ENCODE measurements at regions of chr7 and their contacts with region 1.

Region 1: DNA sequence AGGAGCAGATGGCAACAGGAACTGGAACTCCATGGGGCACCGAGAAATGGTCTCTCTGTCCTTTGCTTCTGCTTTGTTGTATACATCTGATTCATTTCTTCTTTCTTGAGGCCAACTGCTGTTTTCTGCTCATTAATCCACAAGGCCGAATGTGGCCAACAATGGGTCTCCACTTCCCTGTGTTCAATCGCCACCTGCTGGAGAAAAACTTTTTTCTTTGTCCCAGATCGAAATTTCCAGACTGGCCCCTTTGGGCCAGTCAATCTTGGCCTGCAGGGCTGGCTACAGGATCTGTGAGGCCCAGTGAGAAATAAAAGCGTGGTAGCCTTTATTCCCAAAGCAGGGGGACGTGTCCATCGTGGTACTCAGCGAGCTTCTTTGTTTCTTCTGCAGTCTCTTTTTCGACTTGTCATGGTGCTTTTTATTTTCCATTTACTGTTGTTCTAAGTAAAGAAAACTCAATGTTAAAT is 58.8 kb downstream of the PARP12 start:
- DNase-seq: peak; percentile 79
- CTCF ChIP-seq: peak; percentile 57

Region 2: GRCh38 chr7:139494835-139495579 is 508.9 kb before region 1 on chr7:
- in situ Hi-C with region 1: loop called (anchors 10 kb)
- DNase-seq: peak; percentile 73
- CTCF ChIP-seq: no peak

Region 3: DNA sequence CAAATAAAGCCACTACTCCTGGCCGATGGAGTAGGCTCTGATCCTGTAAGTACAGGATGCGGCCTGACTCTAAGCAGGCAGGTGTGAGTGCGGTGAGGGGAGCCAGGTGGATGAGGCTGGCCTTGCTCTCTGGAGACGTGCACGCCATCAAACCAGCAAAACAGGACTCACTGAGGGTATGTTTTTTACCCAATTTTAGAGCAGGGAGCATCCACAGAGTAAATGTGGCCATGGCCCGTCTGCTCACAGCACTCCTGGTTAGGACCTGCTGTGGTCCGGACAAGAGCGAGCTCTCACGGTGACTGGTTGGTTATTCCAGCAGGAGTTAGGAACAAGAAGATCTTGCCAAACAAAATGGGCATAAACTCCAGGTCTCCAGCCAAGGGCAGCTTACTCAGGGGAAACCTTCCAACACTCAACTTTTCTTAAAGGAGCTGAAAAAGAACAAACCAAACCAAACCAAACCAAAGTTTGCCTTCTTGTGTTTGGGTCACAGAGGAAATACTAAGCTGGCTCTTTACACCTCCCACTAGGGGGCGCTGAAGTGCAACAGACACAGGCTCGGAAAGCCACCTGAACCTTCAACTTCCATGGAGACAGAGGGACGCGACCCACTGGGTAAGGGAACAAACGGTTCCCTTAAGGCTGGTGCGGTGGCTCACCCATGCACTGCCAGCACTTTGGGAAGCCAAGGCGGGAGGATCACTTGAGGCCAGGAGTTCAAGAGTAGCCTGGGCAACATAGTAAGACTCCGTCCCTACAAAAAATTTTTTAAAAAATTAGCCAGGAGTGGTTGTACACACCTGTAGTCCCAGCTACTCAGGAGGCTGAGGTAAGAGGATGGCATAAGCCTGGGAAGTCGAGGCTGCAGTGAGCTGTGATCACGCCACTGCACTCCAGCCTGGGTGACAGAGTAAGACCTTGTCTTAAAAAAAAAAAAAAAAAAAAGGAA is 358.1 kb before region 1 on chr7:
- in situ Hi-C with region 1: loop called (anchors 10 kb)
- DNase-seq: peak; percentile 69
- CTCF ChIP-seq: peak; percentile 91